ENCODE measurements at regions of chr5 and their contacts with region 1.

Region 1: GRCh38 chr5:151825445-151825844 is 53.7 kb downstream of the G3BP1 start:
- DNase-seq: peak; percentile 76
- H3K4me3 ChIP-seq: no peak overlapping the region
- H3K27ac ChIP-seq: no peak overlapping the region
- H3K4me1 ChIP-seq: no peaks in the 10 kb centered on the region
- H3K27me3 ChIP-seq: no peaks in the 10 kb centered on the region
- CTCF ChIP-seq: peak; percentile 88

Region 2: DNA sequence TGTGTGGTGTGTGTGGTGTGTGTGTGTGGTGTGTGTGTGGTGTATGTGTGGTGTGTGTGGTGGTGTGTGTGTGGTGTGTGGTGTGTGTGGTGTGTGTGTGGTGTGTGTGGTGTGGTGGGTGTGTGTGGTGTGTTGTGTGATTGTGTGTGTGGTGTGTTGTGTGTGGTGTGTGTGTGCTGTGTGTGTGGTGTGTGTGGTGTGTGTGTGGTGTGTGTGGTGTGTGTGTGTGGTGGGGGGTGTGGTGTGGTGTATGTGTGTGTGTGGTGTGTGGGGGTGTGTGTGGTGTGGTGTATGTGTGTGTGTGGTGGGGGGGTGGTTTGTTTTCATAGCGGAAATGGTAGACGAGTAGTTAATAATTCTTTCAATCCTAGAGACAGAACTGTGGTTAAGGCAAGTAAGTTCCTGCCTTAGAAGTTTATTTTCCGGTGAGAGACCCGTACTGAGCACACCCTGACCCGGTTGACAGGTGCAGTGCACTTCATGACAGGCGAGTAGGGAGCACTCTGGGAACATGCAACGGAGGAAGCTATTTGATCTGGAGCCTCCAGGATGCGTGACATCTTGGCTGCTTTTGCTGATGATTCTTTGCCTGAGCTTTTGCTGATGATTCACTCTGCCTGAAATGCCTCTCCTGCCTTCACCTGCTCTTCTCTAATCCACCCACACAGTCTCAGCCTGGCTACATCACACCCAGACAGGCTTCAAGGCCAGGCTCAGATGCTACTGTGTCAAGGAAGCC is 212.6 kb before region 1 on chr5:
- CTCF ChIA-PET with region 1: no interaction called
- POLR2A ChIA-PET with region 1: no interaction called
- intact Hi-C with region 1: no loop called
- DNase-seq: no peak
- H3K4me3 ChIP-seq: no peak overlapping the region
- H3K27ac ChIP-seq: no peak overlapping the region
- H3K4me1 ChIP-seq: no peaks in the 10 kb centered on the region
- H3K27me3 ChIP-seq: peaks cover 8% of the 10 kb centered on the region
- CTCF ChIP-seq: no peak

Region 3: DNA sequence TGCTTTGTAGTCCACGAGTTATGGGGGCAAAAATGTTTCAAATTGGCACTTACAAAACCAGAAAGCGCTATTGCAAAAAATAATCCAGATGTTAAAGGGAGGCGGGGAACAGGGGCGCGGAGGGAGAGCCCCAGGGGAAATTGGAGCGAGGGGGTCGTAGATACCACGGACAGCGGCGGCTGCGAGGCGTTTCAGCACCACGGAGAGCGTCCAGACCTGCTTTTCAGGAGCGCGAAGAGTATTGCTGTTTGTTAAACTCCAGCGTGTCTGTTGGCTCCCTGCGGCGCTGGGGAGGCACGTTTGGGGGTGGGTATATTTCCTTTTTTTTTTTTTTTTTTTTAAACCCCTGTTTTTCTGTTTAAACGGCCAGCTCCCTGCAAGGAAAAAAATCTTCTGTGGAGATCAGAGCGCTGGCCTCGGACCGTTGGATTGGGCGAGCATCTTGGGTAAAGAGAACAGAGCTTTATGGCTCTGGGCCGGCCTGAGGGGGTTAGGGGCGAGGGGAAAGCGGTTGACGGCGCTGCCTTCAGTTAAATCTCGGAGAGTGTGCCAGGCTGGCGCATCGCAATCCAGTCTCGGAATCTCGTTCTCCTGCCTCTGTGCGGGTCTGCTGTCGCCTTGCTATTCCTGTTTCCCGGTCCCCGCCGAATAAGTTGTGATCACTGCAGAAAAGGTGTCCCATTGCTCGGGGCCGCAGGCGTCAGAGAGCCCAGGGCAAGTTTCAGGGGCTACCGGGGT is 99.3 kb after region 1 on chr5 and contains the start of gene GLRA1:
- CTCF ChIA-PET with region 1: no interaction called
- POLR2A ChIA-PET with region 1: no interaction called
- intact Hi-C with region 1: loop called (anchors 5 kb)
- DNase-seq: peak; percentile 74
- H3K4me3 ChIP-seq: no peak within 1 kb of the TSS
- H3K27ac ChIP-seq: no peak within 1 kb of the TSS
- H3K4me1 ChIP-seq: no peaks in the 10 kb centered on the region
- H3K27me3 ChIP-seq: peaks cover 52% of the 10 kb centered on the region
- CTCF ChIP-seq: no peak
- total RNA-seq, gene GLRA1: not detected in 2 replicates

Region 4: DNA sequence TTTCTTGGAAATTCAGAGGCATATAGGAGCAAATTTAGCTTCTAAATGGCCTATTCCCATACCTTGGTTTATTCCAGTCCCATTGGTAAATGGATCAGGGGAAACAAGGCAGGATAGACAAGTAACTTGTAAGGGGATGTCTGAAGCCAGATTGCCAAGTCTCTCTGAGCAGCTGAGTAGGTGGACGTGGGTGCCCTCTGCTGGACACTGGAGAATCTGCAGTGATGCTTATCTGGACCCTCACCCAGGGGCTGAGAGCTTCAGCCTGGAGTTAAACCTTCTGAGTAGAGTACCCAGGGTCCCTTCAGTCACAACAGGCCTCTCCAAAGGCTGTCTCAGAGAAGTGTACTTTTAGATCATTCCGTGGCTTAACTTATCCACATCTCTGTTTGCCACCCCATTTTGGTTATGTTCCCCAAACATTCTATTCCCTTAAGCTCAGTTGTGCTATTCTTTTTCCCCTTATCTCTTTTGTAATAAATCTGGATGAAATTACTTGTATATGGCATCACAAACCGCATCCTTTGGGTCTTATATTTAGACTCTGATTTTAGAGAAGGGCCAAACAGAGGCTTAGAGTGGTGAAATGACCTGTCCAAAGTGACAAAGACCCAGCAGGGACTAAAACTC is 317.5 kb after region 1 on chr5:
- CTCF ChIA-PET with region 1: interaction called, 57 read pairs
- POLR2A ChIA-PET with region 1: no interaction called
- intact Hi-C with region 1: loop called (anchors 1 kb)
- DNase-seq: peak; percentile 67
- H3K4me3 ChIP-seq: no peak overlapping the region
- H3K27ac ChIP-seq: no peak overlapping the region
- H3K4me1 ChIP-seq: no peaks in the 10 kb centered on the region
- H3K27me3 ChIP-seq: peaks cover 14% of the 10 kb centered on the region
- CTCF ChIP-seq: peak; percentile 86

Region 5: GRCh38 chr5:152259702-152260101 is 434.3 kb after region 1 on chr5:
- CTCF ChIA-PET with region 1: no interaction called
- POLR2A ChIA-PET with region 1: no interaction called
- intact Hi-C with region 1: loop called (anchors 10 kb)
- DNase-seq: no peak
- H3K4me3 ChIP-seq: no peak overlapping the region
- H3K27ac ChIP-seq: no peak overlapping the region
- H3K4me1 ChIP-seq: no peaks in the 10 kb centered on the region
- H3K27me3 ChIP-seq: peaks cover 12% of the 10 kb centered on the region
- CTCF ChIP-seq: no peak

Region 6: GRCh38 chr5:152314196-152314829 is 488.9 kb after region 1 on chr5:
- CTCF ChIA-PET with region 1: no interaction called
- POLR2A ChIA-PET with region 1: no interaction called
- intact Hi-C with region 1: no loop called
- DNase-seq: no peak
- H3K4me3 ChIP-seq: no peak overlapping the region
- H3K27ac ChIP-seq: no peak overlapping the region
- H3K4me1 ChIP-seq: no peaks in the 10 kb centered on the region
- H3K27me3 ChIP-seq: no peaks in the 10 kb centered on the region
- CTCF ChIP-seq: no peak

Region 7: GRCh38 chr5:152349683-152350526 is 524.5 kb after region 1 on chr5:
- CTCF ChIA-PET with region 1: interaction called, 3 read pairs
- POLR2A ChIA-PET with region 1: no interaction called
- intact Hi-C with region 1: loop called (anchors 2 kb)
- DNase-seq: peak; percentile 41
- H3K4me3 ChIP-seq: no peak overlapping the region
- H3K27ac ChIP-seq: no peak overlapping the region
- H3K4me1 ChIP-seq: no peaks in the 10 kb centered on the region
- H3K27me3 ChIP-seq: no peaks in the 10 kb centered on the region
- CTCF ChIP-seq: peak; percentile 88

Region 8: DNA sequence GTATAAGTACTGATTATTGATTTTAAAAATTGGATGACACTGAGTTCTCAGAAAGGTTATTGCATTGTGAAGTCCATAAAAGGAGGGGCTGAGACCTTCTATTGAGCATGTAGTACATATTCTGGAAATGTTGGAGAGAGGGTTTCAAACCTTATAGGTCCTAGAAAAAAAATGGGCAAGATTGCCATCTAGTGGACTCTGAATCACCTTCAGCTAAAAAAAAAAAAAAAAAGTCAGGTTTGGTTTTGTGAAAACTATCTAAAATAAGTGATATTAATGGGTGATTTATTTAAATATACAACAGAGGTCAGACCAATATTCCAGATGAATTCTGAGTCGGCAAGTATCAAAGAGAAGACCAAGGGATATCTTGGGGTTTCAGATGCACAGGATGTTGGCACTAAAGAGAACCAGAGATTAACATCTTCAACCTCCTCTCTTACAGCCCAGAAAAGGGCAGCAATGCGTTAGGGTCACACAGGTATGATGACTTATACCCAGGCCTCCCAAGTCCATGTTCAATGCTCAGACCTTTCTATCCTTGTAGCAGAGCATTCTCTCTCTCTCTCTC is 689.5 kb after region 1 on chr5:
- CTCF ChIA-PET with region 1: no interaction called
- POLR2A ChIA-PET with region 1: no interaction called
- intact Hi-C with region 1: loop called (anchors 2 kb)
- DNase-seq: peak; percentile 33
- H3K4me3 ChIP-seq: no peak overlapping the region
- H3K27ac ChIP-seq: no peak overlapping the region
- H3K4me1 ChIP-seq: no peaks in the 10 kb centered on the region
- H3K27me3 ChIP-seq: peaks cover 23% of the 10 kb centered on the region
- CTCF ChIP-seq: peak; percentile 63

Measured in A673 (cell line).